Right cardiac atrium (tissue), 5 donors: ENCODE measurements at regions of chr9 and their contacts with region 1.

Region 1: DNA sequence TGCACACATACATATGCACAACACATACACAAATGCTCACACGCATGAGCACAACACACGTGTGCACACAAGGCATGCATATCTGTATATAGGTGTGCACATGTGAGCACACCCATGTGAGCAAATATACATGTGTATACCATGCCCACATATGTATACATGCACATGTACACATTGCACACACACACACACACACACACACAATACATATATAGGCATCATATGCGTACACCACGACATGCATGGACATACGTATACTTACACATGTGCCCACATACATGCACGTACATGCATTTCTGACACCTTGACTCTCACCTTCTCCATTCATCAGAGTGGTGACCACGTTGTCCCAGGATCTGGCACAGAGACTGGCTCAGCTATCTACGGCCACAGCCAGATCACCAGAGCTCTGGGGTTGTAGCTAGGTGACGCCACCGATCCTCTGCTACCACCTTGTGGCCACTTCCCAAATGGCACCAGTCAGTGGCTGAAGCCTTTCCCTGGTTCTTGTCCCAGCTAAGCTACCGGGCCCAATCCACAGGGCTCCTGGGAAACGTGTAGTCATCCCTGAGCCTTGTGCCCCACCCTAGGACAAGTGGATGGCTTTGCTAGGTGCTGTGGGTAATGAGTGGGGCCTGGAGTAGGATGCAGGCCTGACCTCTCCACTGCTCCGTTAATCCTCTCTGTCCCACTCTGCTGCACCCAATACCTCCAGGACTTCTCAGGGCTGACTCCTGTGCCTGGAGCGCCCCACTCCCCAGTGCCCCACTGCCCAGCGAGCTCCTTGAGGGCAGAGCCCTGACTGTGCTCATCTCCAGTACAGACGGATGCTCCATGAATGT is 194.4 kb downstream of the RGS3 start:
- DNase-seq: peak; percentile 85 to 94 (median 92)
- ATAC-seq: peak; percentile 69 to 72
- H3K4me3 ChIP-seq: no peak overlapping the region
- H3K27ac ChIP-seq: no peak overlapping the region
- H3K4me1 ChIP-seq: peaks cover 11% of the 10 kb centered on the region
- H3K27me3 ChIP-seq: no peaks in the 10 kb centered on the region

Region 2: GRCh38 chr9:113431191-113431590 is 226.7 kb before region 1 on chr9:
- intact Hi-C with region 1: loop called in 1 of 4 experiments (anchors 5 kb)
- DNase-seq: no peak
- ATAC-seq: no peak
- H3K4me3 ChIP-seq: no peak overlapping the region
- H3K27ac ChIP-seq: no peak overlapping the region
- H3K4me1 ChIP-seq: no peaks in the 10 kb centered on the region
- H3K27me3 ChIP-seq: no peaks in the 10 kb centered on the region

Region 3: DNA sequence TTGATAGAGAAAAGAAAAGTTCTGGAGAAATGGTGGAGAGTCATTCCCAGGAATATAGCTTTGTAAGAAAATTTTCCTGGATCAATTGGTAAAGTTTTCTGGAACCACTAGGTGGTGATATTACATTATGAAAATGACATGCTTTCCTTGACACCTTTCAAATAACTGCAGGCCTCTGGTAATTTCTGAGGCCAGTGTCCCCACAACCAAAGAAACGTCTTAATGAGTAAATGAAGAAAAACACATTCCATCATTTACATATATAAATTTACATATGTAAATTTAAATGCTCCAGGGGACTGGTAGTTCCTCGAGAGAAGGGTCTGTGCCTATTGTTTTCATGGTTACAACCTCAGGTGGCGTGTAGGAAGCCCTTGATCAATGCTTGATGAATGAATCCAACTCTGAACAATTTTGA is 211.6 kb before region 1 on chr9:
- intact Hi-C with region 1: loop called (anchors 2 to 5 kb)
- DNase-seq: no peak
- ATAC-seq: peak; percentile 61 to 78
- H3K4me3 ChIP-seq: no peak overlapping the region
- H3K27ac ChIP-seq: peak overlapping the region; percentile 83
- H3K4me1 ChIP-seq: peaks cover 2% of the 10 kb centered on the region
- H3K27me3 ChIP-seq: no peaks in the 10 kb centered on the region

Region 4: DNA sequence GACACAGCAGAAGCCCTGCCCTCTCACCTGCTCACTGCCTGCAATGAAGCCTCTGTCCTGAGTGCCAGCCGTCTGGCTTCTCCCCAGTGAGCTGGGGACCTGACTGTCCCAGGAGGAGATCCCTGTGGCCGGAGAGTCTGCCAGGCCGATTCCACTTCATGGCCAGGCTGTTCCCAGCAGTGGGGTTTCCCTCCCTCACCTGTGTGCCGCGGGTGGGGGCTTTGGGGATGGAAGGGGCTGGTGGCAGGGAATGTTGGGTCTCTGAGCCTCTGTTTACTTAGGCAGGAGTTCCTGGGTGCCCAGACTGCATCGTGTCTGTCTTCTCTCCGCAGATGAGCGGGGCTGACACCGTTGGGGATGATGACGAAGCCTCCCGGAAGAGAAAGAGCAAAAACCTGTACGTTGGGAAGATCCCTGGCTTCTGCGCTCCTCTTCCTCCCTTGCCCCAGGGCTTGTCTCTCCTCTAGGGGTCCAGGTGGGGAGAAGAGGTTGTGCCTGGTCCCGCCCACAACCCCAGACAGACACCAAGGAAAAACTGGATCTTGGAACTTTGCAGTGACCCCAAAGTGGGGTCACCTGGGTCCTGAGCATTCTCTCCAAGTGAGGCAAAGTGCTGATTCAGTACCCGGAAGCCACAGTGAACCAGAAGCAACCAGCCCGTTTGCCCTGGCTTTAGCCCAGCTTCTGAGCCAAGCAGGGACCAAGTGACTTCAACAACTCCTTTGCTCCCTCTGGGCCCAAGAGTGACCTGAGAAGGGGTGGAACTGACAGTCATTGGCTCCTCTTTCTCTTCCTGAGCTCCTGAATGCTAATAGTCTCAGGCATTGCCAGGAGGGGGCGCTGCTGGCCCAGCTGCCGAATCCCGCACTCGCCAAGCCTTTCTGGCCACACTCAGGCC is 66.7 kb before region 1 on chr9:
- intact Hi-C with region 1: loop called (anchors 1 to 2 kb)
- DNase-seq: peak; percentile 77 to 93 (median 92)
- ATAC-seq: peak; percentile 5 to 6
- H3K4me3 ChIP-seq: no peak overlapping the region
- H3K27ac ChIP-seq: peak overlapping the region; percentile 53
- H3K4me1 ChIP-seq: peaks cover 20% of the 10 kb centered on the region
- H3K27me3 ChIP-seq: no peaks in the 10 kb centered on the region